Naive thymus-derived CD4-positive, alpha-beta T cell (primary cell): ENCODE measurements at regions of chr7 and their contacts with region 1.

Region 1: DNA sequence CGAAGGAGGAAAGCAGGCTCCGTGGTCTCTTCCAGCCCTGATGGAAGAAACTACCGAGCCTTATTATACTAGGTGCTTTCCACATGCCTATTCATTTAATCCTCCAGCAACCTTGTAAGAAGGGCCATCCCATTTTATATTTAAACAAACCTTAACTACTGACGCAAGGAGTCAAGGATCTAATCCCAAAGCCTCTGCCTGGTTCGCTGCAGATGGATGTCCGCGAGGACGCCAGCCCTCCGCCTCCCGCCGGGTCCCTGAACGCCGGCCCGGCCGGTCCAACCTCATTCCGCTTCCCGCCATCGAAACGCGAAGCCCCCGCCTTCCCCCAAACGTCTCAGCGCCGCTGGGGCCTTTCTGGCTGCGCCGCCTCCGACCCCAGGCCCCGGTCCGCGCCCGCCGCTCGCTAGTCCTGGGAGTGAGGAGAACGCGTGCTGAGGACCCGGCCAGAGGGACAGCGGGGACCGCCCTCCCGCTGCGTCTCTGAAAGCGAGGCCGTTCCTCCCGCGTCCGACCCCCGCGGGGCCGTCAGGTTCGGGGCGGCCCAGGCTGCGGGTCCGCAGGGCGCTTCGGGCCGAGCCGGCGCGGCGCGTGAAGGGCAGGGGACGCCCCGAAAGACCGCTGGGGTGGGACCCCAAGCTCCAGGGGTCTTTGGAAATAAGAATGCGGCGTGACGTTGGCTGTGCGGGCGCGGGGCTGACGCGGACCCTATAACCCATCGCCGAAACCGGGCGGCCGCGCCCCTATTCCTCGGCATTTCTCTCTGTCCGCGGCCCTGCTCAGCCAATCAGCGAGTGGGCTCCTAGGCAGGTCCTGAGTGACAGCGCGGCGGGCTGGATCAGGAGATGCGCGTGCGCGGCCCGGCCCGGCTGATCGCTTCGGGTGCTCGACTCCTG is at the start of gene ATP6V0E2:
- DNase-seq: peak; percentile 81 to 92 (median 85)
- ATAC-seq: peak; percentile 84
- H3K4me3 ChIP-seq: peak within 1 kb of the TSS; percentile 76
- H3K4me3 Mint-ChIP-seq: peak within 1 kb of the TSS; percentile 79 to 95 (median 91)
- H3K27ac ChIP-seq: peak within 1 kb of the TSS; percentile 88
- H3K27ac Mint-ChIP-seq: peak within 1 kb of the TSS; percentile 48 to 98 (median 92)
- H3K4me1 ChIP-seq: peaks cover 56% of the 10 kb centered on the region in 2 donors
- H3K4me1 Mint-ChIP-seq: peaks cover 45 to 89% (median 81%) of the 10 kb centered on the region in 7 donors
- H3K27me3 ChIP-seq: no peaks in the 10 kb centered on the region
- H3K27me3 Mint-ChIP-seq: no peaks in the 10 kb centered on the region
- total RNA-seq, gene ATP6V0E2: 32.7 to 84.0 (median 55.4) TPM

Region 2: DNA sequence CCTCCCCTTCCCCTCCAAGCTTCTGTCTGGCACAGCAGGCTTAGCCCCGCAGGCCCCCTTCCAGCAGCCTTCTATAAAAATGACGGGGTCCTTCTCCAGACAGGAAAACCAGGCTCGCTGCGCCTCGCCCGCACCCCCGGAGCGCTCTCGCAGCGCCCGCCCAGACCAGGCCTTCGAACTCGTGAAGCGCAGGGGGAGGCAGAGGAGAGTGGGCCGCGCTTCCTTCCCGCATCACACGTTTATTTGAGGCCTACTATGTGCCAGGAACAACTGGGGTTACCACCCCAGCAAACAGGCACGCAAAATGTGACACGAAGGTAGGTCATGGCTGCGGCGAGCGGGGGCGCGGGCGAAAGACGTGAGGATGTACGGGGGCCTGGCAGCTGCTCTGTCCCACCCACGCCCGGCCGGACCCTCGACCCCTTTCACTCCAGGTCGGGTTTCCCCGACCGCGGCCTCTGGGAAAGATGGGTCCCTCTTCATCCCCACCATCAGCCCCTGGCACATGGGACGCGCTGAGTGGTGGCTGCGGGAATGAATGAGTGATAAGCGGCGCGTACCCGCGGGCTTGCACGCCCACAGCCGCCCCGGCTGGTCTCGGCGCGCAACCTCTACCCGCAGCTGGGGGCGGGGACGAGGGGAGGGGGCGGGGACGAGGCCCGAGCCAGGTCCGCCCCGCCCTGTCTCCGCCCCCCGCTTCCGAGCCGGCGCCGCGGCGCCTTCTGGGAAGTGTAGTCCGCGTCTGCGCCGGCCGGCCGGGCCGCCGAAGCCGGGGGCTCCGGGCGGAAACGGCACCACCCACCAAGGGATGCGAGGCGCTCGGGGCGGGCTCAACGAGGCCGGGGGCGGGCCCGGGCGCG is 159.0 kb before region 1 on chr7:
- CTCF ChIA-PET with region 1: no interaction called
- POLR2A ChIA-PET with region 1: no interaction called
- intact Hi-C with region 1: loop called (anchors 1 to 10 kb)
- DNase-seq: peak; percentile 68 to 89 (median 84)
- ATAC-seq: peak; percentile 99
- H3K4me3 ChIP-seq: peak overlapping the region; percentile 75
- H3K4me3 Mint-ChIP-seq: peak overlapping the region; percentile 71 to 87 (median 80)
- H3K27ac ChIP-seq: peak overlapping the region; percentile 72
- H3K27ac Mint-ChIP-seq: peak overlapping the region in 4 of 9 donors; percentile 5 to 72 (median 54)
- H3K4me1 ChIP-seq: peaks cover 10 to 13% of the 10 kb centered on the region in 2 donors
- H3K4me1 Mint-ChIP-seq: peaks cover 12 to 26% (median 19%) of the 10 kb centered on the region in 7 donors
- H3K27me3 ChIP-seq: no peaks in the 10 kb centered on the region
- H3K27me3 Mint-ChIP-seq: peaks cover 0 to 4% (median 0%) of the 10 kb centered on the region in 5 donors

Region 3: GRCh38 chr7:149727899-149728476 is 145.3 kb before region 1 on chr7:
- CTCF ChIA-PET with region 1: no interaction called
- POLR2A ChIA-PET with region 1: no interaction called
- intact Hi-C with region 1: no loop called
- DNase-seq: no peak
- ATAC-seq: no peak
- H3K4me3 ChIP-seq: no peak overlapping the region
- H3K4me3 Mint-ChIP-seq: no peak overlapping the region
- H3K27ac ChIP-seq: no peak overlapping the region
- H3K27ac Mint-ChIP-seq: no peak overlapping the region
- H3K4me1 ChIP-seq: no peaks in the 10 kb centered on the region
- H3K4me1 Mint-ChIP-seq: no peaks in the 10 kb centered on the region
- H3K27me3 ChIP-seq: no peaks in the 10 kb centered on the region
- H3K27me3 Mint-ChIP-seq: no peaks in the 10 kb centered on the region

Region 4: DNA sequence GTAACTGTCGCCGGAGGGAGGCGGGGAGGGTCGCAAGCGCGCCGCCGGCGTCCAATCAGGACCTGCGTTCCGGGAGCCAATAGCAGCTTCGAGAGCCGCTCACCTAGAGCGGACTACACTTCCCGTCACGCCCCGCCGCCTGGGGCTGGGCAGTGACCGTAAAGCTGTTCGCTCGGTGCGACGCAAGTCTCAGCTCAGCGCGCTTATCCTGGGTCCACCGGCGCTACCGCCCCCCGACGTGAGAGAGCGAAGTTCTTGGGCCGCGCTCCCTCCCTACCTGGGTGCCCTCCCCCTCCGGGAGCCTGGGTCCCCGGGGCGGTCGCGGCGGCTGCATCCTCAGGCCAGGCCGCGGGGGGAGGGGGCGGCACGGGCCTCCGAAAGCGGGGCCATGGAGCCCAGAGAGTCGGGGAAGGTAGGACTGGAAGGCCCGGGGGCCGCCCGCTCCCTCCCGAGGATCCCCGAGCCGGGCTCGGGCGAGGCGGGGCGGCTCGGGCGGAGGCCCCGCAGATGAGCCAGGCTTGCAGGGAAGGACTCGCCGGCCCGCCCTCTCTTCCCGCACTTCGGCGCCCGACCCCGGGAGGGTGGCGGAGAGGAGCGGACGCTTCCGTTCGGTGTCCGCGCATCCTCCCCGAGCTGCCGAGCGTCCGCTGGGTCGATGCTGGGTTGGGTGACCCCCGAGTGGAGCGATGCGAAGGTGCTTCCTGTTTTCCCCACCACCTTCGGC is 34.9 kb before region 1 on chr7 and contains the start of gene ZNF862:
- CTCF ChIA-PET with region 1: interaction called, 6 read pairs
- POLR2A ChIA-PET with region 1: interaction called, 81 read pairs
- intact Hi-C with region 1: loop called (anchors 1 kb)
- DNase-seq: peak; percentile 84 to 96 (median 94)
- ATAC-seq: peak; percentile 99
- H3K4me3 ChIP-seq: peak within 1 kb of the TSS; percentile 67
- H3K4me3 Mint-ChIP-seq: peak within 1 kb of the TSS; percentile 85 to 97 (median 91)
- H3K27ac ChIP-seq: peak within 1 kb of the TSS; percentile 79
- H3K27ac Mint-ChIP-seq: peak within 1 kb of the TSS; percentile 77 to 96 (median 88)
- H3K4me1 ChIP-seq: peaks cover 12 to 22% of the 10 kb centered on the region in 2 donors
- H3K4me1 Mint-ChIP-seq: peaks cover 25 to 52% (median 48%) of the 10 kb centered on the region in 7 donors
- H3K27me3 ChIP-seq: no peaks in the 10 kb centered on the region
- H3K27me3 Mint-ChIP-seq: peaks cover 0 to 15% (median 3%) of the 10 kb centered on the region in 5 donors
- total RNA-seq, gene ZNF862: 36.9 to 112 (median 41.8) TPM

Region 5: GRCh38 chr7:149854611-149855360 is 18.5 kb before region 1 on chr7:
- CTCF ChIA-PET with region 1: interaction called, 4 read pairs
- POLR2A ChIA-PET with region 1: interaction called, 36 read pairs
- intact Hi-C with region 1: no loop called
- DNase-seq: peak in 4 of 9 donors; percentile 42 to 57 (median 48)
- ATAC-seq: peak; percentile 66
- H3K4me3 ChIP-seq: no peak overlapping the region
- H3K4me3 Mint-ChIP-seq: peak overlapping the region in 9 of 10 donors; percentile 33 to 83 (median 70)
- H3K27ac ChIP-seq: peak overlapping the region; percentile 52
- H3K27ac Mint-ChIP-seq: peak overlapping the region in 8 of 9 donors; percentile 66 to 92 (median 84)
- H3K4me1 ChIP-seq: peaks cover 3 to 52% of the 10 kb centered on the region in 2 donors
- H3K4me1 Mint-ChIP-seq: peaks cover 43 to 84% (median 71%) of the 10 kb centered on the region in 7 donors
- H3K27me3 ChIP-seq: no peaks in the 10 kb centered on the region
- H3K27me3 Mint-ChIP-seq: no peaks in the 10 kb centered on the region

Region 6: GRCh38 chr7:149883452-149883861 is 10.1 kb after region 1 on chr7:
- CTCF ChIA-PET with region 1: interaction called, 32 read pairs
- POLR2A ChIA-PET with region 1: interaction called, 10 read pairs
- intact Hi-C with region 1: loop called in 1 of 2 experiments (anchors 1 kb)
- DNase-seq: peak in 4 of 9 donors; percentile 58 to 63 (median 60)
- ATAC-seq: peak; percentile 81
- H3K4me3 ChIP-seq: no peak overlapping the region
- H3K4me3 Mint-ChIP-seq: peak overlapping the region in 1 of 10 donors; percentile 38
- H3K27ac ChIP-seq: no peak overlapping the region
- H3K27ac Mint-ChIP-seq: peak overlapping the region in 6 of 9 donors; percentile 11 to 80 (median 62)
- H3K4me1 ChIP-seq: peaks cover 0 to 7% of the 10 kb centered on the region in 2 donors
- H3K4me1 Mint-ChIP-seq: peaks cover 5 to 26% (median 19%) of the 10 kb centered on the region in 7 donors
- H3K27me3 ChIP-seq: no peaks in the 10 kb centered on the region
- H3K27me3 Mint-ChIP-seq: no peaks in the 10 kb centered on the region

Region 7: GRCh38 chr7:150891740-150892139 is 1018.4 kb after region 1 on chr7:
- CTCF ChIA-PET with region 1: no interaction called
- POLR2A ChIA-PET with region 1: no interaction called
- intact Hi-C with region 1: no loop called
- DNase-seq: no peak
- ATAC-seq: no peak
- H3K4me3 ChIP-seq: no peak overlapping the region
- H3K4me3 Mint-ChIP-seq: no peak overlapping the region
- H3K27ac ChIP-seq: no peak overlapping the region
- H3K27ac Mint-ChIP-seq: no peak overlapping the region
- H3K4me1 ChIP-seq: no peaks in the 10 kb centered on the region
- H3K4me1 Mint-ChIP-seq: no peaks in the 10 kb centered on the region
- H3K27me3 ChIP-seq: no peaks in the 10 kb centered on the region
- H3K27me3 Mint-ChIP-seq: peaks cover 0 to 34% (median 16%) of the 10 kb centered on the region in 5 donors